ENCODE measurements at regions of chr7 and their contacts with region 1.

Region 1: GRCh38 chr7:5494683-5495561 is 71.3 kb upstream of the TNRC18 start:
- DNase-seq: peak; percentile 82
- H3K4me3 ChIP-seq: no peak overlapping the region
- H3K27ac ChIP-seq: peak overlapping the region in 1 of 2 donors; percentile 69
- H3K4me1 ChIP-seq: peaks cover 40% of the 10 kb centered on the region
- H3K27me3 ChIP-seq: no peaks in the 10 kb centered on the region
- CTCF ChIP-seq: peak; percentile 80 to 90 (median 88)
- POLR2A ChIP-seq: no peak

Region 2: GRCh38 chr7:4325732-4326131 is 1169.2 kb before region 1 on chr7:
- intact Hi-C with region 1: no loop called
- DNase-seq: no peak
- H3K4me3 ChIP-seq: no peak overlapping the region
- H3K27ac ChIP-seq: no peak overlapping the region
- H3K4me1 ChIP-seq: no peaks in the 10 kb centered on the region
- H3K27me3 ChIP-seq: no peaks in the 10 kb centered on the region
- CTCF ChIP-seq: no peak
- POLR2A ChIP-seq: no peak

Region 3: GRCh38 chr7:5634107-5634950 is 139.4 kb after region 1 on chr7:
- intact Hi-C with region 1: no loop called
- DNase-seq: peak; percentile 77
- H3K4me3 ChIP-seq: no peak overlapping the region
- H3K27ac ChIP-seq: peak overlapping the region; percentile 10 to 69
- H3K4me1 ChIP-seq: peaks cover 60% of the 10 kb centered on the region
- H3K27me3 ChIP-seq: no peaks in the 10 kb centered on the region
- CTCF ChIP-seq: no peak
- POLR2A ChIP-seq: no peak

Region 4: DNA sequence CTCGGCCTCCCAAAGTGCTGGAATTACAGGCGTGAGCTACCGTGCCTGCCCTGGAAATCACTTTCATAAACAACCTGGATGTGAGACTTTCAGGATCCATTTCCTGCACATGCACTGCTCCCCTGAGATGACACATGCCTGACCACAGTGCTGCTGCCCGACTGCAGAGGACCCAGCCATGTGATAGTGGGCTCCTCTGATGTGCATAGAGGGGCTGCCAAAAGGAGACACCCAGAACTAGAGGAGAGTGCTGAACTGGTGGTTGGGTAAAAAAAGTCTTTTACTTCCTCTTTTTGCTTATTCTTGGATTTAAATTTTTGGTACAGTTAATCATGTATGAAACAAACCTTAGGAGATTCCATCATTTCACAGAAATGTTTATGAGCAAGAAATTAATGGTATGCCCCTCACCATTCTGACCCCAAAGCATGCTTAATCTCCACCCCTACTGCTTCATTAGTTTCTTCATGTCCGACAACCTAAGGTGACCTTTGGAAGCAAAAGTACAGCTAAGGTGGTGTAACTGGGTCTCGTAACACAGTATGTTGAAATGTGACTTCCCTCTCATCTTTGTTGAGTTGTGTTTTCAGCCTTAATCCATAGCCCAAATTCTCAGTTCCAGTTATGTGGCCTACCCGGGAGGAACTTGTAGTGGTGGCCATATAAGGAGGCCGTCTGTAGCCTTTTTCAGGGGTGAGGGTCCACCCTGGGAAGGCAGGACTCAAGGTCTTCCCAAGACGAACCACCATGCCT is 175.4 kb after region 1 on chr7:
- intact Hi-C with region 1: loop called (anchors 5 kb)
- DNase-seq: no peak
- H3K4me3 ChIP-seq: no peak overlapping the region
- H3K27ac ChIP-seq: peak overlapping the region; percentile 16 to 61
- H3K4me1 ChIP-seq: peaks cover 46% of the 10 kb centered on the region
- H3K27me3 ChIP-seq: no peaks in the 10 kb centered on the region
- CTCF ChIP-seq: no peak
- POLR2A ChIP-seq: no peak

Measured in testis (tissue), 5 donors.